Heart left ventricle (tissue), 16 donors: ENCODE measurements at regions of chr11 and their contacts with region 1.

Region 1: GRCh38 chr11:24356501-24356900 is 140.4 kb upstream of the LUZP2 start:
- DNase-seq: no peak
- ATAC-seq: no peak
- H3K4me3 ChIP-seq: no peak overlapping the region
- H3K27ac ChIP-seq: no peak overlapping the region
- H3K4me1 ChIP-seq: no peaks in the 10 kb centered on the region
- H3K27me3 ChIP-seq: no peaks in the 10 kb centered on the region
- CTCF ChIP-seq: no peak
- POLR2A ChIP-seq: no peak

Region 2: GRCh38 chr11:24181395-24182047 is 175.0 kb before region 1 on chr11:
- intact Hi-C with region 1: no loop called
- DNase-seq: no peak
- ATAC-seq: no peak
- H3K4me3 ChIP-seq: no peak overlapping the region
- H3K27ac ChIP-seq: no peak overlapping the region
- H3K4me1 ChIP-seq: no peaks in the 10 kb centered on the region
- H3K27me3 ChIP-seq: no peaks in the 10 kb centered on the region
- CTCF ChIP-seq: no peak
- POLR2A ChIP-seq: no peak

Region 3: DNA sequence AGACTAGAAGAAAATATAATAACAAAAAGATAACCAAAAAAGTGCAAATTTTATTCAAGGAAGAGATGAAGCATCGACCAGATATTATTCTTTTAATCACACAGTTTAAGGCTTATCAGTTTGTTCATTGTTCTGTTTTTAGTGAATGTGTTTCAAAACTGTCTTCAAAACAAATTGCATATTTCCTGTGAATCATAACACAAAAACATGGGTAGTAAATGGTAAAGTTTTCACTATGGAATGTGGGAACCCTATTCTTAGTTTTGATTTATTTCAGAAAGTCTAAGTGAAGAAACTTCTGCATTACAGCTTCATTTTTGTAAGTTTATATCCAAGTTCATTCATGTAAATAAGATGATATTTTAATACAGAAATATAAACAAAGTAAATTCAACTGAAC is 67.2 kb before region 1 on chr11:
- intact Hi-C with region 1: no loop called
- DNase-seq: no peak
- ATAC-seq: no peak
- H3K4me3 ChIP-seq: no peak overlapping the region
- H3K27ac ChIP-seq: no peak overlapping the region
- H3K4me1 ChIP-seq: no peaks in the 10 kb centered on the region
- H3K27me3 ChIP-seq: no peaks in the 10 kb centered on the region
- CTCF ChIP-seq: no peak
- POLR2A ChIP-seq: no peak

Region 4: DNA sequence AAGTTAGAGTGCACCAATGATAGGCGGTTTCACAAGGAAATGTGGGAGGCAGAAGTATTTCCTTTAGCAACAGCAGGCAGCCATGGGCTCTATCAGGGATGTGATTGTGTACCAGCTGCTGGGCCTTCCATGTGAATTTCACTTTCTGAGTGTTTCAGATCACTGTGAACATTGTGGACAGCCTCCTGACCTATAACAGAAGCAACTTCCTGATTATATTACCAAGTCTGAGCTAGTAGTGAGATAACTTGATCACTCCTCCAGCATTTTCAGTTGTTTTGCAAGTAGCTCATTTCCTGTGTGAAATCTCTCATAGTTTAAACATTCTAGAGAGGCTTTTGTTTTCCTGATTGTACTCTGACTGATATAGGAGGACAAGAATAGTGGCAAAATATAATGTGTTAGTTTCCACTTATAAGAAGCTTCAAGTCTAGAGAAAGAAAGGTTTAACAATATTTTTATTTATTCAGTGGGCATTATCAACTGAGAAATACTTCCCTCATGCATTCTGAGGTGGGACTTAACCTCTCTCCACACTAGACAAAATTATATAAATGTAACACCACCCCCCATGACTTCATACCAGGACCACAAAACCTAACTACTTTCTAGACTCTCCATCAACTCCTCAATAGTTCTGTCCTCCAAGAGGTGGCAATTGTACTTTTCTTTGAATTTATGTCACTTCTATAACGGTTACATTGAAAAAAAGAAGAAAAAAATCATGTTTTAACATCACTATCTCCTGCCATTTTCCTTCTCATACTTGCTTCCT is 43.9 kb before region 1 on chr11:
- intact Hi-C with region 1: loop called in 1 of 10 experiments (anchors 10 kb)
- DNase-seq: no peak
- ATAC-seq: no peak
- H3K4me3 ChIP-seq: no peak overlapping the region
- H3K27ac ChIP-seq: no peak overlapping the region
- H3K4me1 ChIP-seq: no peaks in the 10 kb centered on the region
- H3K27me3 ChIP-seq: no peaks in the 10 kb centered on the region
- CTCF ChIP-seq: no peak
- POLR2A ChIP-seq: no peak